ENCODE measurements at regions of chr13 and their contacts with region 1.

Region 1: DNA sequence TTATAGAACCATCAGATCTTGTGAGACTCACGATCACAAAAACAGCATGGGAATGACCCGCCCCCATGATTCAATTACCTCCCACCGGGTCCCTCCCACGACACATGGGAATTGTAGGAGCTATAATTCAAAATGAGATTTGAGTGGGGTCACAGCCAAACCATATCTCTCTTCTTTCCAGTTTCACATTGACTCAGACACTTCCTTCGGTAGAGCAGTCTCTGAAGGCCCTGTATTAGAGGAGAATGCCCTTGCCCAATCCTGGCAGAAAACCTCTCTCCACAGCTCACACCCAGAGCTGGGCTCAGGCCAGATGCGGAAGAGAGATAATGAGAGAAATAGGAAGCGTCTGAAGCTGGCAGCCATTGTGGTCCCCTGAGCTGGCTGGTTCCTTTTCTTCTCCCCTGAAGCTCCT is 72.4 kb upstream of the CLDN10 start:
- DNase-seq: peak; percentile 65
- H3K4me3 ChIP-seq: no peak overlapping the region
- H3K27ac ChIP-seq: no peak overlapping the region
- H3K4me1 ChIP-seq: peaks cover 22% of the 10 kb centered on the region
- H3K27me3 ChIP-seq: no peaks in the 10 kb centered on the region
- CTCF ChIP-seq: no peak
- POLR2A ChIP-seq: no peak

Region 2: GRCh38 chr13:94674609-94675348 is 805.4 kb before region 1 on chr13:
- CTCF ChIA-PET with region 1: no interaction called
- POLR2A ChIA-PET with region 1: no interaction called
- dilution Hi-C with region 1: no loop called
- intact Hi-C with region 1: loop called (anchors 1 kb)
- DNase-seq: peak; percentile 49
- H3K4me3 ChIP-seq: no peak overlapping the region
- H3K27ac ChIP-seq: no peak overlapping the region
- H3K4me1 ChIP-seq: no peaks in the 10 kb centered on the region
- H3K27me3 ChIP-seq: peaks cover 6 to 26% of the 10 kb centered on the region in 2 experiments
- CTCF ChIP-seq: peak; percentile 60 to 78
- POLR2A ChIP-seq: no peak

Region 3: GRCh38 chr13:95378603-95379002 is 101.5 kb before region 1 on chr13:
- CTCF ChIA-PET with region 1: no interaction called
- POLR2A ChIA-PET with region 1: no interaction called
- dilution Hi-C with region 1: no loop called
- intact Hi-C with region 1: loop called (anchors 1 kb)
- DNase-seq: no peak
- H3K4me3 ChIP-seq: no peak overlapping the region
- H3K27ac ChIP-seq: no peak overlapping the region
- H3K4me1 ChIP-seq: peaks cover 3% of the 10 kb centered on the region
- H3K27me3 ChIP-seq: peaks cover 2 to 6% of the 10 kb centered on the region in 2 experiments
- CTCF ChIP-seq: no peak
- POLR2A ChIP-seq: no peak

Region 4: DNA sequence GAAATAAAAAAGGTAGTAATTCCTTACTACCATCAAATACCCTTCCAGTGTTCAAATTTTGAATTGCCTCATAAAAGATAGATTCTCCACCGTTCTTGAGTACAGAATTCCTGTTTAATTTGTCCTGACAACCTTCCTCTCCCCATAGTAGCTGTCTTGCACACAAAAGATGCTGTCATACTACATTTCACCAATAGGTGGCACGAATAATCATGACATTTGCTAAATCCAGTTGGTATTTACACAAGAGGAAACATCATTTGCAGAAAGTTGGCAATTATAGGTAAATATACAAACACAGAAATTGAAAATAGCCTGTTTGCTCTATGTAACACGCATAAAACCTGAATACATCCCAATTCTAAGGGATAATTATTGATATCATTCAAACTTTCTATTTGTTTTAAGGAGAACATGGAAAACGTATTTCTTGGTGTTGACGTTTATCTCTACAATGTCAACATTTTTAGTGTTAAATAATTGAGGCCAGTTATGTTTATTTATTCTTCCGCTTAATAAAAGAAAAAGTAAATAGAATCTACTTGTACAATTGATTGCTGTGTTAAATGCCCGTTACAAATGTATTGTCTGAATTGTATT is 14.0 kb after region 1 on chr13:
- CTCF ChIA-PET with region 1: interaction called, 10 read pairs
- POLR2A ChIA-PET with region 1: no interaction called
- dilution Hi-C with region 1: no loop called
- intact Hi-C with region 1: no loop called
- DNase-seq: peak; percentile 85
- H3K4me3 ChIP-seq: no peak overlapping the region
- H3K27ac ChIP-seq: no peak overlapping the region
- H3K4me1 ChIP-seq: no peaks in the 10 kb centered on the region
- H3K27me3 ChIP-seq: no peaks in the 10 kb centered on the region
- CTCF ChIP-seq: peak; percentile 48 to 59
- POLR2A ChIP-seq: no peak

Measured in endothelial cell of umbilical vein (primary cell).